Natural killer cell (primary cell): ENCODE measurements at regions of chr20 and their contacts with region 1.

Region 1: DNA sequence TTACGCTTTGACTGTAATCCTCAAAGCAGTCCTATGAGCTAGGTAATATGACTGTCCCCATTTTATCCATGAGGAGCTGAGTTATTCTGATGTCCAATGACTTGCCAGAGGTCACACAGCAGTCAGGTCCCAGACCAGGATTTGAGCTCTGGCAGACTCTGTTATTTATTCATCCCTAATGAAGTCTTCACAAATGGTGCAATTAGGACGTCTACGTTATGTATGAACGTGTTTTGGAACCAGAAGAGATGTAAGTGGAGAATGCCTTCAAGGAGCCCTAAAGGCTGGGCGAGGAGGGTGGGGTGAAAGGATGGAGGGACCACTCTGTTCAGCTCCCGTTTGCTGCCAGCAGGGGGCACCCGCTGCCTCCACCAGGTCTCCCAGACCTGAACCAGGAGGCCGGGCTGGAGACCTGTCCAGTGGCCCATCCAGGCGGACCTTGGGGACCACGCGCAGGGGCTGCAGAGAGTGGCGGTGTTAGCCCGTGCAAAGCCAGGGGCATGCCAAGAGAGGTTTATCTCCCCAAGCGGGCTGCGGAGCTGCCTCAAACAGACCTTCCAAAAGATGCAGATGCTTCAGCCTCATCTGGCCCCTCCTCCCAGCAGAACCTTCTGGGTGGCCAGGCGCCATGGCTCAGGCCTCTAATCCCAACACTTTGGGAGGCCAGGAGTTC is 15.2 kb upstream of the ZNF335 start:
- DNase-seq: peak; percentile 81 to 86
- ATAC-seq: peak; percentile 94 to 98 (median 98)
- H3K4me3 ChIP-seq: no peak overlapping the region
- H3K4me3 Mint-ChIP-seq: no peak overlapping the region
- H3K27ac ChIP-seq: no peak overlapping the region
- H3K27ac Mint-ChIP-seq: no peak overlapping the region
- H3K4me1 ChIP-seq: peaks cover 14% of the 10 kb centered on the region
- H3K4me1 Mint-ChIP-seq: peaks cover 0 to 7% of the 10 kb centered on the region in 2 donors
- H3K27me3 ChIP-seq: peaks cover 2% of the 10 kb centered on the region
- H3K27me3 Mint-ChIP-seq: peaks cover 0 to 2% of the 10 kb centered on the region in 2 donors
- CTCF ChIP-seq: peak; percentile 95

Region 2: GRCh38 chr20:46013826-46014516 is 26.7 kb after region 1 on chr20:
- intact Hi-C with region 1: loop called (anchors 1 kb)
- DNase-seq: peak; percentile 62 to 87
- ATAC-seq: peak; percentile 63 to 68 (median 66)
- H3K4me3 ChIP-seq: peak overlapping the region; percentile 5
- H3K4me3 Mint-ChIP-seq: peak overlapping the region; percentile 67
- H3K27ac ChIP-seq: no peak overlapping the region
- H3K27ac Mint-ChIP-seq: peak overlapping the region; percentile 3 to 50
- H3K4me1 ChIP-seq: peaks cover 55% of the 10 kb centered on the region
- H3K4me1 Mint-ChIP-seq: peaks cover 27 to 49% of the 10 kb centered on the region in 2 donors
- H3K27me3 ChIP-seq: peaks cover 49% of the 10 kb centered on the region
- H3K27me3 Mint-ChIP-seq: peaks cover 66 to 70% of the 10 kb centered on the region in 2 donors
- CTCF ChIP-seq: peak; percentile 99